Lower leg skin (tissue), 4 donors: ENCODE measurements at regions of chr16 and their contacts with region 1.

Region 1: GRCh38 chr16:75764154-75764768 is 38.0 kb upstream of the CPHXL start:
- DNase-seq: peak in 1 of 2 donors; percentile 45
- H3K4me3 ChIP-seq: no peak overlapping the region
- CTCF ChIP-seq: no peak
- POLR2A ChIP-seq: no peak

Region 2: GRCh38 chr16:75198135-75198600 is 566.1 kb before region 1 on chr16:
- intact Hi-C with region 1: loop called (anchors 10 kb)
- DNase-seq: peak in 1 of 2 donors; percentile 84
- H3K4me3 ChIP-seq: no peak overlapping the region
- CTCF ChIP-seq: no peak
- POLR2A ChIP-seq: no peak

Region 3: GRCh38 chr16:75475420-75475847 is 288.8 kb before region 1 on chr16:
- intact Hi-C with region 1: loop called (anchors 2 kb)
- DNase-seq: no peak
- H3K4me3 ChIP-seq: no peak overlapping the region
- CTCF ChIP-seq: no peak
- POLR2A ChIP-seq: no peak

Region 4: DNA sequence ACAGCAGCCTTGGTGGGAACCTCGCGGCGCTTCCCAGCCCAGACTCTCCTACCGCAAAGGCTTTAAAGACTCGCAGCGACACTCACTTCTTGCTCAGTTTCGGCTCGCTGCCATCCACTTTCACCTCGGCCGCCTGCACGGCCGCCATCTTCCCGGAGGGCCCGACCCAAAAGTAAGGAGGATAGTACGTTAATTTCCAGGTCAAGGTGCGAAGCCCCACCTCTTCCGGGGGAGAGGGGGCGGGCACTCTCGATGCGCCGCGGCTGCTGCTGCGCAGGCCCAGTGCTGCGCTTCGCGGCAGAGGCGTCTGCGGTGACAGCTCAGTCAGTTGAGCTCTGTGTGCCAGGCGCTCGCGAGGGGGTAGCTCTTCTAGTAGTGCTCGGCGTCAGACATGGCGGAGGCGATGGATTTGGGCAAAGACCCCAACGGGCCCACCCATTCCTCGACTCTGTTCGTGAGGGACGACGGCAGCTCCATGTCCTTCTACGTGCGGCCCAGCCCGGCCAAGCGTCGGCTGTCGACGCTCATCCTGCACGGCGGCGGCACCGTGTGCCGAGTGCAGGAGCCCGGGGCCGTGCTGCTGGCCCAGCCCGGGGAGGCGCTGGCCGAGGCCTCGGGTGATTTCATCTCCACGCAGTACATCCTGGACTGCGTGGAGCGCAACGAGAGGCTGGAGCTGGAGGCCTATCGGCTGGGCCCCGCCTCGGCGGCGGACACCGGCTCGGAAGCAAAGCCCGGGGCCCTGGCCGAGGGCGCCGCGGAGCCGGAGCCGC is 116.6 kb before region 1 on chr16 and contains the starts of genes KARS1 and TERF2IP:
- intact Hi-C with region 1: loop called (anchors 10 kb)
- DNase-seq: peak; percentile 94 to 98
- H3K4me3 ChIP-seq: peak within 1 kb of the TSS; percentile 91
- CTCF ChIP-seq: no peak
- POLR2A ChIP-seq: peak in 1 of 2 donors; percentile 89
- total RNA-seq, gene KARS1: 88.6 to 110 (median 100) TPM
- total RNA-seq, gene TERF2IP: 72.6 to 97.2 (median 85.2) TPM